Body of pancreas (tissue), 4 donors: ENCODE measurements at regions of chr5 and their contacts with region 1.

Region 1: DNA sequence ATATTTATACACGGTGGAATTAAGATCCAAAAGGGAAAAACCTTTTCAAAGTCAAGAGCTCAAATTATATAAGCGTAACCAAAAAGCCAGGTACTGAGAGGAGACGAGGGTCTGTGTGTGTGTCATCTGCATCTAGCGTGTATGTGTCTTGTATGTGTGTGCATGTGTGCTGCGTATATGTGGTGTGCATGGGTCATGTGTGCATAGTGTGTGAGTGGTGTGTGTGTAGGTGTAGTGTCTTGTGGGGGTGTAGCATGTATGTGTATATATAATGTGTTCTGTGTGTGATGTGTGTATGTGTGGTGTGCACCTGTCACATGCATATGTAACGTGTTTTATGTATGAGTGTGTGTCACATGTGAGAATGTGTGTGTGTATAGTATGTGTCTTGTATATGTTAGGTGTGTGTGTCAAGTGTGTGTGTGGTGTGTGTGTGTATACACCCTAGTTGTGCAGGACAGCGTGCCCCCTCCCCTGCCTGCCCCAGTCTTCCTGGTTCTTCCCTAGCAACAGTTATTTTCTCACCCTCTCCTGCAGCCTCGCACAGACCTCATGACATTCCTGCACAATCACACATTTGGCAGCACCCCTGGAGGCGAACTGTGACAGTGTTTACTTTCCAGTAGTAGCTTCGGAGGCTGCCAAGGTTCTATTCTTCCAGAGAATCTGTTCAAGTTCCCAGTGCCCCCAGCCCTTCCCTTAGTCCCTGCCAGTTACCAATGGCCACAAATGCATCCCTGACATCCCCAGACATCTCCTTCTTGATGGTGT is 27.1 kb upstream of the TNIP1 start:
- DNase-seq: peak; percentile 89 to 96 (median 94)
- ATAC-seq: peak; percentile 96
- H3K4me3 ChIP-seq: no peak overlapping the region
- H3K27ac ChIP-seq: peak overlapping the region; percentile 77 to 86 (median 82)
- H3K4me1 ChIP-seq: peaks cover 55% of the 10 kb centered on the region
- H3K27me3 ChIP-seq: no peaks in the 10 kb centered on the region
- CTCF ChIP-seq: peak in 4 of 7 experiments; percentile 48 to 58 (median 51)
- POLR2A ChIP-seq: no peak

Region 2: DNA sequence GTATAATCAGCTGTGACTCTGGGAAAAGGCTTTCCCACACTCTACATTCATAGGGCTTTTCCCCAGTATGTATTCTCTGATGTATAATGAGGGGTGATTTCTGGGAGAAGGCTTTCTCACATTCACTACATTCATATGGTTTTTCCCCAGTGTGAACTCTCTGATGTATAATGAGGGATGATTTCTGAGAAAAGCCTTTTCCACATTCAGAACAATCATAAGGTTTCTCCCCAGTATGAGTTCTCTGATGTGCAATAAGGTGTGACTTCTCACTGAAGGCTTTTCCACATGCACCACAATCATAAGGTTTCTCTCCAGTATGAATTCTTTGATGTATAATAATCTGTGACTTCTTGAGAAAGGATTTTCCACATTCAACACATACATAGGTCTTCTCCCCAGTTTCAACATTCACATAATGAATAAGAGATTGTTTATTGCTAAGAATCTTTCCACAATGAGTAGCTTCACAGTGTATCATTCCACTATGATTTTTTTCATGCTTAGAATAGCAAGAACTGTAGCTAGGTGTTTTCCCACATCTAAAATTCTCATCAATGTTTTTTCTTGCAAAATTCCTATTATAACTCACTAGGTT is 176.5 kb before region 1 on chr5:
- intact Hi-C with region 1: no loop called
- DNase-seq: no peak
- ATAC-seq: no peak
- H3K4me3 ChIP-seq: no peak overlapping the region
- H3K27ac ChIP-seq: no peak overlapping the region
- H3K4me1 ChIP-seq: no peaks in the 10 kb centered on the region
- H3K27me3 ChIP-seq: no peaks in the 10 kb centered on the region
- CTCF ChIP-seq: no peak
- POLR2A ChIP-seq: no peak

Region 3: DNA sequence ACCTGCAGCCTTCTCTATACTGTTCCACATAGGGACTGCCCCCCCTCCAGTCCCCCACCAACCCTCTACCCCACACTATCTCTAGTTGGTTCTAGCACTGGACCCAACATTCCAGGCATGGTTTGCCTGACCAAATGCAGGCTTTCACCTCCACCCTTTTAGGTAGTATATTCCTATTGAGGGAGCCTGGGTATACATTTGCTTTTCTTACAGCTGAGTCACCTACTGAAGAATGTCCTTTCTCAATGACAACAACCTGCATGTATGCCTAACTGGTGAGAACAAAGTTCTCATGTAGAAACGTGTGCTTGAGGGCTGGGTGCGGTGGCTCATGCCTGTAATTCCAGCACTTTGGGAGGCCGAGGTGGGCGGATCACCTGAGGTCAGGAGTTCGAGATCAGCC is 35.3 kb before region 1 on chr5:
- intact Hi-C with region 1: loop called (anchors 5 kb)
- DNase-seq: no peak
- ATAC-seq: no peak
- H3K4me3 ChIP-seq: no peak overlapping the region
- H3K27ac ChIP-seq: no peak overlapping the region
- H3K4me1 ChIP-seq: peaks cover 78% of the 10 kb centered on the region
- H3K27me3 ChIP-seq: no peaks in the 10 kb centered on the region
- CTCF ChIP-seq: no peak
- POLR2A ChIP-seq: no peak

Region 4: DNA sequence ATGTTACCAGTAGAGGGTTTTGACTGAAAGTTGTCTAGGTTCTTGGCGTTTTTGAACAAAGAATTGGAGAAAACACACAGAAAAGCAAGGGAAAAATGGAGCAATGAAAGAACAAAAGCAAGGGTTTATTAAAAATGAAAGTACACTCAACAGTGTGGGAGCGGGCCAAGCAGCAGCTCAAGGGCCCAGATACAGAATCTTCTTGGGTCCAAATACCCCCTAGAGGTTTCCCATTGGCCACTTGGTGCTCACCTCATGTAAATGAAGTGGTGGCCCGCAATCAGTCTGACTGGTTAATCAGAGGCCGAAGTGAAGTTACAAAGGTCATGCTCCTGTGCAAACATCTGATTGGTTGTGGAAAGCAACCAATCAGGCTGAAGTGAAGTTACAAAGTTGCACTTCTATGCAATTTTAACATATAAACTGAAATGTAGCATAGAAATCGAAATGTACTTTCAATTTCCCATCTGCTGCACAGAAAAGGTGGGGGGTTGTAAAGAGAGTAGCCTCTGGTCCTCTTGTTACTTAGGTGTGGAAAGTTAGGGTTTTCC is 143.2 kb after region 1 on chr5:
- intact Hi-C with region 1: no loop called
- DNase-seq: peak in 2 of 4 donors; percentile 40 to 54
- ATAC-seq: no peak
- H3K4me3 ChIP-seq: no peak overlapping the region
- H3K27ac ChIP-seq: peak overlapping the region in 3 of 4 donors; percentile 25 to 44 (median 33)
- H3K4me1 ChIP-seq: peaks cover 45% of the 10 kb centered on the region
- H3K27me3 ChIP-seq: no peaks in the 10 kb centered on the region
- CTCF ChIP-seq: no peak
- POLR2A ChIP-seq: no peak

Region 5: DNA sequence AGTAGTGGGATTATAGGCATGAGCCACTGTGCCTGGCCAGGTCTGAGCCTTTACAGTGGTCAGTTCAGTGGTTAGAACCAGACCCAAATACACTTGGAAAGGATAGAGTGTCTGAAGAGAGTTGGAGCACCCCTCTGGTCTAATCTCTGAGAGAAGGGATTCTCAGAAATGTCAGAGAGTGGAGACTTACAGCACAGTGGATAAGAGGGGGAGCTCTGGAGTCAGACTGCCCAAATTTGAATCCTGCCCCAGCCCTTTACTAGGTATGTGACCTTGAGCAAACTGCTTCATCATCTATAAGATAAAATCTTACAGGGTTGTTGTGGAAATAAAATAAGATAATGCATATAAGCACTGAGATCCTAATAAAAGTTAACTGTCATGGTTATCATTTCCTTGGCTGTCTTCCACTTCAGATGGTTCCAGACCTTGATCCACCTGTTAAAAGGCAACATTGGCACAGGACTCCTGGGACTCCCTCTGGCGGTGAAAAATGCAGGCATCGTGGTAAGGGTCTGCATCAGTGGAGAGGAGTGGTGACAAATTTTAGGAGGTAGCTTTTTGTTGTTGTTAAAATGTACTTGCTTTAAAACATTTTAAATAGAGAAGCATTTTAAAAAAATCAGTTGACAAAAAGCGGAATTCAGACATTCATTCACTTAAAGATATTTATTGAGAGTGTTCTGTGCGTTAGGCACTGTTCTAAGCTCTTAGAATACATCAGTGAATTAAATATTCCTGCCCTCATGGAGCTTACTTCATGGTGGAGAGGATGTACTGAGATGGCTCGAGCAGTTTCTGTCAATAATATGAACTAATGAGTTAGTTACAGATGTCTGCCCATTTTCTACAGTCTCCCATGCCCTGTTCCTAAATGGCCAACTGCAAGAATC is 355.5 kb after region 1 on chr5:
- intact Hi-C with region 1: no loop called
- DNase-seq: no peak
- ATAC-seq: no peak
- H3K4me3 ChIP-seq: no peak overlapping the region
- H3K27ac ChIP-seq: no peak overlapping the region
- H3K4me1 ChIP-seq: no peaks in the 10 kb centered on the region
- H3K27me3 ChIP-seq: no peaks in the 10 kb centered on the region
- CTCF ChIP-seq: peak in 2 of 7 experiments; percentile 5 to 6
- POLR2A ChIP-seq: no peak